ENCODE measurements at regions of chr18 and their contacts with region 1.

Region 1: GRCh38 chr18:32092422-32093101 is 888 bp downstream of the RNF138 start:
- DNase-seq: peak; percentile 100
- H3K4me3 ChIP-seq: peak overlapping the region; percentile 91
- H3K27ac ChIP-seq: peak overlapping the region; percentile 99
- H3K4me1 ChIP-seq: peaks cover 10% of the 10 kb centered on the region
- H3K27me3 ChIP-seq: no peaks in the 10 kb centered on the region
- CTCF ChIP-seq: no peak

Region 2: GRCh38 chr18:31942999-31943865 is 149.3 kb before region 1 on chr18 and contains the start of gene TRAPPC8:
- intact Hi-C with region 1: loop called (anchors 10 kb)
- DNase-seq: peak; percentile 100
- H3K4me3 ChIP-seq: peak within 1 kb of the TSS; percentile 80
- H3K27ac ChIP-seq: peak within 1 kb of the TSS; percentile 92
- H3K4me1 ChIP-seq: peaks cover 9% of the 10 kb centered on the region
- H3K27me3 ChIP-seq: no peaks in the 10 kb centered on the region
- CTCF ChIP-seq: no peak
- total RNA-seq, gene TRAPPC8: 43.1 to 49.2 TPM

Region 3: DNA sequence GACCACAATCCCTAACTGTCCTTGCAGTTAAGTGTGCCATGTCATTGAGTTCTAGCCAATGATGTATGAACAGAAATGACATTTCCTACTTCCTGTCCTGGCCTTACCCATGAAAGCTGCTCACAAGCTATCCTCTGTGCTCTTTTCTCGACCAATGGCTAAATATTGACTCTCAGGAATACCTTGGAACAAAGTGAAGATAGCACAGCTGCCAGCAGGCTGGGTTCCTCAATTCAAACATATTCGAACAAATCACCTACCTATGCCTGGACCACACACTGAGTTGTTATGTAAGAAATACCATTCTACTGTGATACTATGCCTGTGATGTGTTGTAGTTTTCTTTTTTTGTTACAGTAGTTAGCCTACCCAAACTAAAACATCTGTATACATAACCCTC is 313.0 kb after region 1 on chr18:
- intact Hi-C with region 1: no loop called
- DNase-seq: no peak
- H3K4me3 ChIP-seq: no peak overlapping the region
- H3K27ac ChIP-seq: no peak overlapping the region
- H3K4me1 ChIP-seq: no peaks in the 10 kb centered on the region
- H3K27me3 ChIP-seq: no peaks in the 10 kb centered on the region
- CTCF ChIP-seq: no peak